Caki2 (cell line): ENCODE measurements at regions of chr17 and their contacts with region 1.

Region 1: GRCh38 chr17:67488161-67488560 is 111.1 kb downstream of the PITPNC1 start:
- DNase-seq: peak; percentile 31

Region 2: DNA sequence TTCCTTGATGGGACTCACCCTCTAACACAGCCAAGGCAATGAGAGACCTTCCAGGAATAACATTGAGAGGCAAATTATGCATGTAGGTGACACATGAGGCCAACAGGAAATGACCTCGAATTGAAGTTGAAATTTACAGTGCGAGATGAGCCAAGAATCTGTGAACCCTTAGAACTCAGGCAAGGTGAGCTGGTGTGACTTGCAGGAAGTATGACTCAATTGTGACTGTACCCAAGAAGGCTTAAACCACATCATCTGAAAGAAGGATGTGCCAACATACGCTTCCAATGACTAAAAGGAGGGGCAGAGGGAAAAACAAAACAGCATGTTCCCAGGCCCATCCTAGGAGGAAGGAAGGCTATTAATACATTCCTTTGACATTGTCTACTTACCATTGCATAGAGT is 66.3 kb before region 1 on chr17:
- in situ Hi-C with region 1: loop called (anchors 5 kb)
- DNase-seq: peak; percentile 99

Region 3: DNA sequence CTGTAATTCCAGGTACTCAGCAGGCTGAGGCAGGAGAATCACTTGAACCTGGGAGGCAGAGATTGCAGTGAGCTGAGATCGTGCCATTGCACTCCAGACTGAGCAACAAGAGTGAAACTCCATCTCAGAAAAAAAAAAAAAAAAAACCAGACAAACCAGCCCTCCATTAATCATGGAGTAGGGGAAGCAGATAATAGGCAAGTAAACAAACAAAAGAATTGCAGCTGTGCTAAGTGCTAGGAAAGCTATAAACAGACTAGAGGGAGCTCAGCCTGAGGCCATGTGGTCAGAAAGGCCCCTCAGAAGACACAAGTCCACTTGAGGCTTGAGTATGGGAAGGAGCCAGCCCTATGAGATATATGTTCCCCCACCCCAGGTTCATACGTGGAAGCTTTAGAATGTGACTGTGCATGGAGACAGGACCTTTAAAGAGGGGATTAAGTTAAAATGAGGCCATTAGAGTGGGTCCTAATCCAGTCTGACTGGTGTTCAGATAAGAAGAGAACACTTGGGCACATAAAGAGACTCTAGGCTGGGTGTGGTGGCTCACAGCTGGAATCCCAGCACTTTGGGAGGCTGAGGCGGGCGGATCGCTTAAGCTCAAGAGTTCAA is 96.9 kb after region 1 on chr17:
- in situ Hi-C with region 1: no loop called
- DNase-seq: peak; percentile 26